RWPE1 (cell line): ENCODE measurements at regions of chr7 and their contacts with region 1.

Region 1: DNA sequence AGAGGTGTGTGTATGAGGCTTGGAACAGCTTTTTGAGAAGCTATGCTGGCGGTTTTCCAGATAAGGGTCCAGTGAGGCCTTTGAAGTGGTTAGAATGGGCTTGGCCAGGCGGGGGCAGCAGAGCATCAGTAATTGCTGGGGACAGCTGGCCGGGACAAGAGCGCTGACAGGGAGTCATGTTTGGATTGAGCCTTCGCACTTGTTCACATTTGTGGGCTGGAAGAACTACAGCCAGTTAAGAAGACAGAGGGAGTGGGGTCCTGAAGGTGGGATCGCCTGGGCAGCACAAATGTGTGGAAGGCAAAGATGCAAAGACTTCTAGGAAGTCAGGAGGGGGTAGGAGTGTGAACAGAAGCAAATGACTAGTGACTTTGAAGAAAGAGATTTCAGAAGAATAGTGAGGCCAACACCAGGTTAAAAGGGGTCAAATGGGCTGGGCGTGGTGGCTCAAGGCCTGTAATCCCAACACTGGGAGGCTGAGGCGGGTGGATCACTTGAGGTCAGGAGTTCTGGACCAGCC is 12.7 kb upstream of the SDHAF3 start:
- DNase-seq: peak; percentile 59
- H3K27ac ChIP-seq: no peak overlapping the region
- CTCF ChIP-seq: peak; percentile 77

Region 2: DNA sequence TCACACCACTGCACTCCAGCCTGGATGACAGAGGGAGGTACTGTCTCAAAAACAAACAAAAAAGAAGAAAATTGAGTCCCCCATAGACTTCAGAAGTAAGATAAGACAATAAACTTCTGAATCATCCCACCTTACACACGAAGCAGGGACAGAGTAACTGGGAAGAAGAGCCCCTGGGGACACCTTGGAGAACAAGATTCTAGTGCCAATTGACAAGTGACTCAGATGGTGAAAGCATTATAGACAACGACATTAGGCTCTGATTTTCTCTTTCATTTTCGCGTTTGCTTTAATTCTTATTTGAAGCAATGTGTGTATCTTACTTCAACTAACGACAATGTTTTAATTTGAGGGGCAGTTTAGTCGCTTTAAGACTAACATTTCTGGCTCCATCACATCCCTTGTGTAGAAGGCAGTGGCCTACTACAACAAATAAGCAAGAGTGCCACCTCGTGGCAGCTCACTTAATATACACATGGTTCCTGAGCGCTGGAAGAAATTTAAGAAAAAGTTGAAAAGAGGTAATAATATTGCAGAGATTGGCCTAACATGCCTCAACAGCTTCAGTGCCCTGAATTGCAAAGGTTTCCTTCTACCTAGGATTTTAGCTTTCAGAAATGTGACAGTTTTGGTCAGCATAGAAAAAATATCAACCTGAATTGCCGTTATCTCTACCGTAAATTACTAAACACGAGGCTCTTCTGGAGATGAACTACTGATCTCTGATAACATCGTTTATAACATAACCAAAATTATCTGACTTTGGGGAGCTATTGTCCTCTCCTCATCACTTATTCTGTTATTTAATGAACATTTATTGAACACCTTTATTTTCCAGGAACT is 730.7 kb after region 1 on chr7:
- CTCF ChIA-PET with region 1: interaction called, 11 read pairs
- POLR2A ChIA-PET with region 1: no interaction called
- DNase-seq: peak; percentile 19
- H3K27ac ChIP-seq: no peak overlapping the region
- CTCF ChIP-seq: peak; percentile 83